Left ventricle myocardium superior (tissue), 1 donor: ENCODE measurements at regions of chr1 and their contacts with region 1.

Region 1: GRCh38 chr1:111769517-111770146 is 13.9 kb downstream of the DDX20 start:
- DNase-seq: no peak
- ATAC-seq: peak; percentile 60

Region 2: DNA sequence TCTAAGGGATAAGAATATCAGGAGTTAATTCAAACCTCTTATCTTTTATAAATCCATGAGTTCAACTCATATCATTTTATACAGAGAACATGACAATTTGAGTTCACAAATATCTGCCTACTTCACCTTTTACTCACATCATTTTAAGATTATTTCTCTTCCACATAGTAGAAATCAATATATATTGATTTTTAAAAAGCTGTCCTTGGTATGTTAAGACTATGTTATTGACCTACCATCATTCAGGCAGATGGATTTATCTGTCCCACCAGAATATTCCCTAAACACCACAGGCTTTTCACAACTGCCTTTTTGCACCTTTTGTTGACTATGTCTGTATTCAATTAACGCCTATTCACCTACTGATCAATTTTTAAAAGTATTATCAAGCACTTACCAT is 643.3 kb before region 1 on chr1:
- intact Hi-C with region 1: no loop called
- DNase-seq: no peak
- ATAC-seq: no peak

Region 3: DNA sequence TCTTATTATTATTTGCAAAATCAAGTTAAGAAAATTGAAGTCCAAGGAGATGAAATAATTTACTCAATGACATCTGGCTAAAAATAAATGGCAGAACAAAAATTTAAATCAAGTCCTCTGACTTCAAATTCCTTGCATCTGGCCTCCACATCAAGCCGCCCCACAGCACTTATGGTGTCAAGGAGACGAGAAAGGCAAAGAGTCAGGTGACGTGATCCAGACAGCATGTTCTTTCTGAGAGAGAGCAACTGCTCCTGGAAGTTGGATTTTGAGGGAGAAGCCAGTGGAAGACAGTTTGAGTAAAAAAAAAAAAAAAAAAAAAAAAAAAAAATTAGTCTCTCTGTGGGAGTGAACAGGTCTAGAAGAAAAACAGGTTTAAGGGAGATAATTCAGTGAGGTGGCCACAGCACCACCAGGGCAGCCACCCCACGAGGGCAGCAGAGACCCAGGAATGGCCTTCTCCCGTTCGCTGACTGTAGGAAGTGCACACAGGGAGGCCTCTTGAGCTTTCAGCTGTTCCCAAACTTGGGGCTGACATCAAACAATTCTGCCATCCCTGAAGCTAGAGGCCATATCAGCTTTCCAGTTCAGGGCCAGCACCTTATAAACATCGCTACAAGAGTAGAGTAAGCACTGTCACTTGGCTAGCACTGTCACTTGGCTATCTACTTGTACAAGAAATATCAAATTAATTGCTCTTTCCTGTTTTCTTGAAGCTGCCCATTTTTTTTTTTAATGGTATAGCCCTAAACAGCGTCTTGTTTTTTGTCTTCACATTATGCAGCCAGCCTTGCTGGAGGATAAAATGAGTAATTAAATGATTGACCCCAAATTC is 288.0 kb before region 1 on chr1:
- intact Hi-C with region 1: loop called (anchors 10 kb)
- DNase-seq: peak; percentile 85
- ATAC-seq: peak; percentile 95